Activated CD4-positive, alpha-beta T cell treated with anti-CD3 and anti-CD28 coated beads for 36 hours (primary cell): ENCODE measurements at regions of chr15 and their contacts with region 1.

Region 1: DNA sequence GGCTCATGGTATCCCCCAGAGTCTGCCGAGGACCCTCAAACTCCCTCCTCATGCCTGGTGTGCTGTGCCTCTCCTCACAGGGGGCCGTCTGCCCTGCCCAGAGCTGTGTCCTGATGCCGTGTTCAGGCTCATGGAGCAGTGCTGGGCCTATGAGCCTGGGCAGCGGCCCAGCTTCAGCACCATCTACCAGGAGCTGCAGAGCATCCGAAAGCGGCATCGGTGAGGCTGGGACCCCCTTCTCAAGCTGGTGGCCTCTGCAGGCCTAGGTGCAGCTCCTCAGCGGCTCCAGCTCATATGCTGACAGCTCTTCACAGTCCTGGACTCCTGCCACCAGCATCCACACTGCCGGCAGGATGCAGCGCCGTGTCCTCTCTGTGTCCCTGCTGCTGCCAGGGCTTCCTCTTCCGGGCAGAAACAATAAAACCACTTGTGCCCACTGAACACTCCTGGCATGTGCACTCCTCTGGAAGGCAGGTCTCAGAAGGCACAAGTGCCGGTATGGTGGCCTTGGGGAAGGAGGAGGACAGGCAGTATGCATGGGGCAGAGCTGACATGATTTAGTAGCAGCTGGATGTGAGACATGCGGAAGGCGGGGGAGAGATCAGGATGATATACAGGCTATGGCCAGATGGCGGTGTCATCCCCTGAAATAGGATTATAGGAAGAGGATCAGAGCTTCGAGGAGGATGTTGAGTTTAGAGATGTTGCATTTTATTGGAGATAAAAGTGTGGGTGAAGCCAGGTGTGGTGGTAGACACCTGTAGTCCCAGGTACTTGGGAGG is 7.6 kb upstream of the MAN2A2 start:
- DNase-seq: no peak
- ATAC-seq: peak; percentile 9
- H3K4me3 Mint-ChIP-seq: no peak overlapping the region
- H3K27ac Mint-ChIP-seq: no peak overlapping the region
- H3K4me1 Mint-ChIP-seq: no peaks in the 10 kb centered on the region
- H3K27me3 Mint-ChIP-seq: no peaks in the 10 kb centered on the region

Region 2: GRCh38 chr15:90641671-90642463 is 253.7 kb before region 1 on chr15:
- CTCF ChIA-PET with region 1: interaction called, 3 read pairs
- POLR2A ChIA-PET with region 1: no interaction called
- intact Hi-C with region 1: loop called (anchors 2 to 5 kb)
- DNase-seq: no peak
- ATAC-seq: no peak
- H3K4me3 Mint-ChIP-seq: no peak overlapping the region
- H3K27ac Mint-ChIP-seq: no peak overlapping the region
- H3K4me1 Mint-ChIP-seq: no peaks in the 10 kb centered on the region
- H3K27me3 Mint-ChIP-seq: no peaks in the 10 kb centered on the region